Vagina (tissue), 2 donors: ENCODE measurements at regions of chr4 and their contacts with region 1.

Region 1: DNA sequence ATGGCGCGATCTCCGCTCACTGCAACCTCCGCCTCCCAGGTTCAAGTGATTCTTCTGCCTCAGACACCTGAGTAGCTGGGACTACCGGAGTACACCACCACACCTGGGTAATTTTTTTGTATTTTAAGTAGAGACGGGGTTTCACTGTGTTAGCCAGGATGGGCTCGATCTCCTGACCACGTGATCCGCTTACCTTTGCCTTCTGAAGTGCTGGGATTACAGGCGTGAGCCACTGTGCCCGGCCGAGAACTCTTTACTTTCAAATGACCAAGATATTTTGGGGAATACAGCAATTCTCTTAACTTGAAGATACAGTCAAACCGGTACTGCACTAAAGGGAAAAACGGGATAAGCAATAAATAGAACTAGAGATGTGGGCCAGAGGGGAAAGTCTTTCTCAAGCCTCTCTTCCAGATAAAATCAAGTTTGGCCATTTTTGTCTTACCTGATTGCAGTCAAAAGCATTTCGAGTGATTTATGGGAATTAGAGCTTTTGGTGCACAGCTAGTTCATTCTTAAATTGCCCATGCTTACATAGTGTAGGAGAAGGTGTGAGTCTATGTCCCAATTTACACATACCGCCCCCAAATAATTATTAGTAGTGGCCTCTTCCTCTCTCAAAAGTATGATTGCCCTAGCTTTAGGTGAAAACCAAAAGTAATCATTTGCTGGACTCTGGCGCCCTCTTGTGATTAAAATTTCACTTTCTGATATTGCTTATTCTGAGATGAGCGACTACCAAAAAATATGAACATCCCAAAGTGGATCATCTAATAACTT is 53.2 kb upstream of the ABCG2 start:
- DNase-seq: no peak
- H3K4me3 ChIP-seq: no peak overlapping the region
- H3K27ac ChIP-seq: no peak overlapping the region
- H3K4me1 ChIP-seq: no peaks in the 10 kb centered on the region
- H3K27me3 ChIP-seq: no peaks in the 10 kb centered on the region
- CTCF ChIP-seq: peak; percentile 53 to 67 (median 66)
- POLR2A ChIP-seq: no peak

Region 2: GRCh38 chr4:87856816-87857215 is 354.8 kb before region 1 on chr4:
- intact Hi-C with region 1: loop called (anchors 5 kb)
- DNase-seq: no peak
- H3K4me3 ChIP-seq: no peak overlapping the region
- H3K27ac ChIP-seq: no peak overlapping the region
- H3K4me1 ChIP-seq: peaks cover 8% of the 10 kb centered on the region
- H3K27me3 ChIP-seq: no peaks in the 10 kb centered on the region
- CTCF ChIP-seq: no peak
- POLR2A ChIP-seq: no peak

Region 3: DNA sequence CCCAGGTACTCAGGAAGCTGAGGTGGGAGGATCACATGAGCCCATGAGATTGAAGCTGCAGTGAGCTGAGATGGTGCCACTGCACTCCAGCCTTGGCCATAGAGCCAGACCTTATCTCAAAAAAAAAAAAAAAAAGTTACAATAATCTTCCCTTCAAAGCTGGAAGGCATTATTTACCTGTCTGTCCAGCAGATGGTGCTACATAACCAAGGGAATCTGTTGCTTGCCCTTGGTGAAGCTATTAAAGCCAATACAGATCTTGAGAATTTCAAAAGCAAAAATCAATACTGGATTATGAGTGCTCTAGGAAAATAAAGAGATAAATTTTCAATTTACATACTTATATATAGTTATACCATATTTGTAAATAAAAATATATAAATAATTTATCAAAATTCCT is 178.4 kb before region 1 on chr4:
- intact Hi-C with region 1: loop called (anchors 10 kb)
- DNase-seq: no peak
- H3K4me3 ChIP-seq: no peak overlapping the region
- H3K27ac ChIP-seq: no peak overlapping the region
- H3K4me1 ChIP-seq: peaks cover 5% of the 10 kb centered on the region
- H3K27me3 ChIP-seq: no peaks in the 10 kb centered on the region
- CTCF ChIP-seq: peak; percentile 40 to 48 (median 48)
- POLR2A ChIP-seq: no peak

Region 4: DNA sequence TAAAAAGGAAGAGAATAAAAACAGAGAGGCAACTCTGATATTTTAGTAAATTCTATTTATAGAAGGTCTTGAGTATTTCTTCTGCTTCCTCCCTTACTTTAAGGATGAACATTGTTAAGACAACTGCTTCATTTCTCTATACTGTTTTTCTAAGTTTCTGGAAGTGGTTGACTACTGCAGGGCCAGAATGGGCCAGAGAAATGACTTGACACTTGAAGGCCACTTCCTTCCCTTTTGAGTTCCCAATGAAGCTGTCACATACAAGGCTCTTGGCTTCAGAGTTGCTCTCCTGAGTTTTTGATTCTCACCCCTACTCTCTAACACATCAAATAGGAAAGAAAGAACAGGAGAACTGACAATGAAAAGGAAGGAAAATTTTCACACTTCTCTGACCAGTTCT is 166.6 kb before region 1 on chr4:
- intact Hi-C with region 1: no loop called
- DNase-seq: no peak
- H3K4me3 ChIP-seq: no peak overlapping the region
- H3K27ac ChIP-seq: no peak overlapping the region
- H3K4me1 ChIP-seq: peaks cover 23% of the 10 kb centered on the region
- H3K27me3 ChIP-seq: no peaks in the 10 kb centered on the region
- CTCF ChIP-seq: no peak
- POLR2A ChIP-seq: no peak

Region 5: GRCh38 chr4:88196013-88196365 is 15.7 kb before region 1 on chr4:
- intact Hi-C with region 1: no loop called
- DNase-seq: no peak
- H3K4me3 ChIP-seq: no peak overlapping the region
- H3K27ac ChIP-seq: no peak overlapping the region
- H3K4me1 ChIP-seq: no peaks in the 10 kb centered on the region
- H3K27me3 ChIP-seq: no peaks in the 10 kb centered on the region
- CTCF ChIP-seq: no peak
- POLR2A ChIP-seq: no peak